ENCODE measurements at regions of chr20 and their contacts with region 1.

Region 1: GRCh38 chr20:45293041-45294002 is 13.3 kb upstream of the RBPJL start:
- DNase-seq: peak; percentile 60
- H3K4me3 ChIP-seq: peak overlapping the region; percentile 50 to 57 (median 50)
- H3K27ac ChIP-seq: no peak overlapping the region
- H3K4me1 ChIP-seq: peaks cover 6% of the 10 kb centered on the region
- H3K27me3 ChIP-seq: no peaks in the 10 kb centered on the region
- CTCF ChIP-seq: peak; percentile 89 to 96

Region 2: GRCh38 chr20:45011108-45011526 is 282.2 kb before region 1 on chr20:
- CTCF ChIA-PET with region 1: interaction called, 4 read pairs
- dilution Hi-C with region 1: no loop called
- in situ Hi-C with region 1: loop called in 1 of 2 experiments (anchors 25 kb)
- intact Hi-C with region 1: loop called (anchors 1 kb)
- DNase-seq: peak; percentile 57
- H3K4me3 ChIP-seq: no peak overlapping the region
- H3K27ac ChIP-seq: peak overlapping the region; percentile 55
- H3K4me1 ChIP-seq: peaks cover 39% of the 10 kb centered on the region
- H3K27me3 ChIP-seq: no peaks in the 10 kb centered on the region
- CTCF ChIP-seq: peak; percentile 72 to 81

Region 3: GRCh38 chr20:45095753-45096371 is 197.5 kb before region 1 on chr20:
- CTCF ChIA-PET with region 1: interaction called, 4 read pairs
- dilution Hi-C with region 1: no loop called
- in situ Hi-C with region 1: no loop called
- intact Hi-C with region 1: loop called (anchors 1 kb)
- DNase-seq: peak; percentile 44
- H3K4me3 ChIP-seq: no peak overlapping the region
- H3K27ac ChIP-seq: no peak overlapping the region
- H3K4me1 ChIP-seq: peaks cover 10% of the 10 kb centered on the region
- H3K27me3 ChIP-seq: no peaks in the 10 kb centered on the region
- CTCF ChIP-seq: peak; percentile 65 to 84

Region 4: GRCh38 chr20:45138561-45139300 is 154.6 kb before region 1 on chr20:
- CTCF ChIA-PET with region 1: interaction called, 4 read pairs
- dilution Hi-C with region 1: no loop called
- in situ Hi-C with region 1: loop called in 1 of 2 experiments (anchors 25 kb)
- intact Hi-C with region 1: loop called (anchors 1 kb)
- DNase-seq: peak; percentile 56
- H3K4me3 ChIP-seq: no peak overlapping the region
- H3K27ac ChIP-seq: no peak overlapping the region
- H3K4me1 ChIP-seq: peaks cover 3% of the 10 kb centered on the region
- H3K27me3 ChIP-seq: no peaks in the 10 kb centered on the region
- CTCF ChIP-seq: peak; percentile 88 to 91

Region 5: DNA sequence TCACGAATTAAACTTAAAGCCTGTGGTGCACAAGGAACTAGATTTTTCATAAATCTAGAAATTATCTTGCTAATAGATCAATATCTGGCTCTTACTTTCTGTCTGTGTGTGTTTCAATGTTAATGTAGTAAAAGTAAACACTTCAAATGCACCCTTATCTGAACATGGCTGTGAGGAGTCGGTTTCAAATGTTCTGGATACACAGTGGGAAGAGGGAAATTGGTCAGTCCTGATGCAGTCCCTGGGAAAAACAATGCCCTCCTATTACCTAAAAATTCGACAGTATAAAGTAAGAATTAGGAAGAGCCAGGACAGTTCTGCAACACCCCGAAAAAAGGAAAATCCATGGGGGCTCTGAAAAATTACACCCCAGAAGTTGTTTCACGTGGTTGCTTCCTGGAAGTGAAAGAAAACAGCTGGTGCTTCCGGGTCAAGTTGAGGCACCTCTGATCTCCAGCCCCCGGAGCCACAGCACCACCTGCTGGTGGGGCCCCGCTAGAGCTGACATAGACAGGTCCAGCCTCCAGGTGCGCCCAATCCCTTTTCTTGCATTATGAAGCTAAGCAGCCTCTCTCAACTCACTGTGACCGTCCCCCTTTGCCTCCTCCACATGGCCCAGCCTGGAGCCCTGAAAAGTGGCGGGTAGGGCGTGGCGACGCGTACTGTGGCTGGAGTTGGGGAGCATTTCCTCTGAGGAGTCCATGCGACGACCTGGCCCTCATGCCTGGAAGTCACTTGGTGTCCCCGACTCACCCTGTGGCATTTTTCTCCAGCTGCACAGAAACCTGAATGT is 63.9 kb before region 1 on chr20:
- CTCF ChIA-PET with region 1: interaction called, 8 read pairs
- dilution Hi-C with region 1: no loop called
- in situ Hi-C with region 1: no loop called
- intact Hi-C with region 1: loop called (anchors 2 kb)
- DNase-seq: peak; percentile 47
- H3K4me3 ChIP-seq: no peak overlapping the region
- H3K27ac ChIP-seq: no peak overlapping the region
- H3K4me1 ChIP-seq: no peaks in the 10 kb centered on the region
- H3K27me3 ChIP-seq: peaks cover 3% of the 10 kb centered on the region
- CTCF ChIP-seq: peak; percentile 81 to 87

Region 6: DNA sequence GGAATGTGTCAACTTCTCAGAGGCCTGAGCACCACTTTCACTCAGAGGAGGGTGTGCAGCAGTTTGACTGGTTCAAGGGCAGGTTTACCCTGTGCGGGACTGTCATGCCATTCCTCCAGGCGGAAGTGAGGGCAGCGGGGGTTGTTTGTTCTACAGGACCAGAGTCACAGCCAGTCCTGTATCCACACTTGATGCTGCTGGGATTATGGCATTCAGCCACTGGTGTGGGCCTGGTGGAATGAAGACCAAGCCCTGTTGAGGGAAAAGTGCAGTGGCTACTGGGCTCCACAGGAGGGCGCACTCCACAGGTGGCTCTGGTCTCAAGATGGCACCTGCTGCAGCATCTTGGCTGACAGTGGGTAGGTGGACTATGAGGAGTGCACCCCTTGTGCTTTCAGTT is 57.3 kb before region 1 on chr20:
- CTCF ChIA-PET with region 1: no interaction called
- dilution Hi-C with region 1: loop called (anchors 5 kb)
- in situ Hi-C with region 1: no loop called
- intact Hi-C with region 1: loop called (anchors 1 kb)
- DNase-seq: no peak
- H3K4me3 ChIP-seq: no peak overlapping the region
- H3K27ac ChIP-seq: no peak overlapping the region
- H3K4me1 ChIP-seq: no peaks in the 10 kb centered on the region
- H3K27me3 ChIP-seq: peaks cover 4% of the 10 kb centered on the region
- CTCF ChIP-seq: peak; percentile 73 to 89

Measured in mammary epithelial cell (primary cell).